Endothelial cell of umbilical vein (primary cell): ENCODE measurements at regions of chr5 and their contacts with region 1.

Region 1: DNA sequence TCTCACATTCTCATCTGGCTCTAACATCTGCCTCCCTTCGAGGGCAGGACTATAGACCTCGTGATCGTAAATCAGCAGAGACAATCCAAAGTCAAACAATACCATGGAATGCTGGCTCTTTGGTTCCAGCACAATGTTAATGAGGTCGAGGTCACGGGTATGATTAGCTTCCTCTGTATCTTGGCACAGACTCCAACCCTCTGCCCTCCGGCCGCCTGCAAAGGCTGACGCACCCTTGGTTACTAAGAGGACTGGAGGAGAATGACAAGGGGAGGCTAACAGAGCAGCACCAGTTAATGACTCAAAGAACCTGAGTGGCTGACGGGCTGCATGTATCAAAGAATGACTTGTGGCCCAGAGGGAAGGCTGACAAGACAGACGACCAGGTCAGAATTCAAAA is 10.1 kb downstream of the LHFPL2 start:
- DNase-seq: peak; percentile 99
- H3K4me3 ChIP-seq: no peak overlapping the region
- H3K27ac ChIP-seq: peak overlapping the region; percentile 90
- H3K4me1 ChIP-seq: peaks cover 40% of the 10 kb centered on the region
- H3K27me3 ChIP-seq: no peaks in the 10 kb centered on the region
- CTCF ChIP-seq: no peak
- POLR2A ChIP-seq: peak; percentile 48

Region 2: DNA sequence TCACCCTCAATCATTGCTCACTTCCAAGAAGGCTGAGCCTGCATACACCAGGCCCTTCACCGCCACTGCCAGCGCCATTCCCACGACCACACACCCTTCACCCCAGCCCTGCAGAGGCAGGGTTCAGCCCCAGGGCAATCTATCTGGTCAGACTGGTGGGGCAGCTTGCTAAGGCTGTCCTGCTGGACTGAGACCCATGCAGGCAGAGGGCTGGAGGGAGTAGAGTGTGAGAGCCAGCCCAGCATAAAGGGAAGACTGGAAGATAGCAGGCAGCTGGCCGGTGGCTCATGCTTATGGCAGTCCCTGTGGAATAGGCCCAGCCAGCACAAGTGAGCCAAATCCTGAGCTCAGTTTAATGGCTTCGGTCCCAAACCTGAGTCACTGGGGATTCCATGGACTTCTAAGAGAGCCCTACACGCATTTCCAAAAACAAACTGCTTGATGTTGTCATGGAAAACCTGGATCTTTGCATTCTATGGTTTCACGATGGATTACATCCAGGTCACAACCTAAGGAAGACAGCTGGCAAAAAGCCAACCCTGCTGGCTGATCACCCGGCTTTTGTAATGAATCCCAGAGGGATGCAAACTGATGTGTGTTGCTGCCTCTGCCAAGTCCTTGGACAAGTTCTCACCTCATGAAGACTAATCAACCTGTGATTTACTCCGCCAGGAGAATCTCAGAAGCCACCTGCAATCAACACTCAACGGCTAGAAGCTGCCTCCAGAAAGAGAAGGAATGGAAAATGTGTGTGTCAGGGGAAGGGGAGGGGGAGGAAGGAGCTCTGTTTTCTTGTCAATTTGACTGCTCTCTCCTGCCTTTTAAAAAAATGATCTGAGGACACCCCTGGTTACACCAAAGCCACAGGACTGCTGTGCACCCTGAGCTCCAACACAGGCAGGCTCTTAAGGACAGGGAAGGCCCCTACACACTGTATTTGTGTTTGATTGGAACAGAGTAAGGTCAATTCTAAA is 133.4 kb before region 1 on chr5:
- CTCF ChIA-PET with region 1: no interaction called
- POLR2A ChIA-PET with region 1: no interaction called
- dilution Hi-C with region 1: no loop called
- intact Hi-C with region 1: loop called (anchors 1 kb)
- DNase-seq: peak; percentile 100
- H3K4me3 ChIP-seq: no peak overlapping the region
- H3K27ac ChIP-seq: peak overlapping the region; percentile 86
- H3K4me1 ChIP-seq: peaks cover 18% of the 10 kb centered on the region
- H3K27me3 ChIP-seq: no peaks in the 10 kb centered on the region
- CTCF ChIP-seq: no peak
- POLR2A ChIP-seq: no peak

Region 3: DNA sequence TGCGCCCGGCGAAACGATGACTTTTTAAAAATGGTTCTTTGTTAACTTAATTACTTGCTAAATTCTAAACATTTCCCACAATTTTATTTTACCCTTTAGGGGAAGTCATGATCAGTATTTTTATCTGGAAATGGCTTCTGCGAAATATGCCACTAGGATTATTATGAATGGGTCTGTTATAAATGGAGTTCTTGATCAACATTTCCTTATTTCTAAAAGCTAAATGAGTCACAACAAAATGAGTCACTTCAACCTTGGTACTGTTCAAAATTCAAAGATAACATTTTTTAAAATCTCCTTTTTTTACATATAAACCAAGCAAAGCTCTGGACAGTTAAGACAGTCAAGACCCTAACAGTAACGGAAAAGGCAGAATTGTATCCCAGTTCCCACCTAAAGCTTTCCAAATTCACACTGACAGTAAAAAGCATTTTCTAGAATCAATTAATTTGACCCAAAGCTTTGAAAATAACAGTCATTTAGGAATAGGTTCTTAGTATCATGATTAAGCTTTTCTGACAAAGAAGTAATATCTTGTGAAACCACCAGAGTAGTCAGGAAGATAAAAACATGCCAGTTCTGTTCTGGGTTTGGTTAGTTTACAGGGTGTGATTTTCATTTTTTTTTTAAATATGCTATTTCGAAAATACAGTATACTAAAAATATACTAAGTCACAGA is 71.5 kb before region 1 on chr5:
- CTCF ChIA-PET with region 1: interaction called, 4 read pairs
- POLR2A ChIA-PET with region 1: no interaction called
- dilution Hi-C with region 1: no loop called
- intact Hi-C with region 1: loop called (anchors 1 kb)
- DNase-seq: peak; percentile 74
- H3K4me3 ChIP-seq: no peak overlapping the region
- H3K27ac ChIP-seq: peak overlapping the region; percentile 71
- H3K4me1 ChIP-seq: peaks cover 39% of the 10 kb centered on the region
- H3K27me3 ChIP-seq: no peaks in the 10 kb centered on the region
- CTCF ChIP-seq: no peak
- POLR2A ChIP-seq: no peak

Region 4: GRCh38 chr5:78594610-78595457 is 43.6 kb before region 1 on chr5:
- CTCF ChIA-PET with region 1: no interaction called
- POLR2A ChIA-PET with region 1: no interaction called
- dilution Hi-C with region 1: no loop called
- intact Hi-C with region 1: loop called (anchors 1 kb)
- DNase-seq: peak; percentile 97
- H3K4me3 ChIP-seq: no peak overlapping the region
- H3K27ac ChIP-seq: peak overlapping the region; percentile 100
- H3K4me1 ChIP-seq: peaks cover 66% of the 10 kb centered on the region
- H3K27me3 ChIP-seq: no peaks in the 10 kb centered on the region
- CTCF ChIP-seq: no peak
- POLR2A ChIP-seq: no peak

Region 5: DNA sequence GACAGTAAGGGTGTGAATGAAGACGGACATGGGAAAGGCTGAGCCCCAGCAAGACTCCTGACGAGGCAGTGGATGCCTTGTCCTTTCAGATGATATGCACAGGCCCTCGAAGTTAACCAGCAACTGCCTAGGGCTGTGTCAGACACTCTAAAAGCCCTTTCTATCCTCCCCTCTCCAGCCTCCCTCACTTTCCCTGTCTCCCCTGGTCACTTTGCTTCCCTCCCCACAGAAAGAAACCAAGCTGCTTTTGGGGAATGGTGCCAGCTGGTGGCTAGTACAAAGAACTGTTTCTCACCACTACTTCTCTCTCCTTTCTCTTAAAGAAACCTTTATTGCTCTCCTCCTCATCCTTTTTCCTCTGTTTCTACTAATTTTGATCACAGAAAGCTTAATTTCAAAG is 11.2 kb before region 1 on chr5:
- CTCF ChIA-PET with region 1: interaction called, 10 read pairs
- POLR2A ChIA-PET with region 1: no interaction called
- dilution Hi-C with region 1: no loop called
- intact Hi-C with region 1: no loop called
- DNase-seq: peak; percentile 44
- H3K4me3 ChIP-seq: no peak overlapping the region
- H3K27ac ChIP-seq: no peak overlapping the region
- H3K4me1 ChIP-seq: no peaks in the 10 kb centered on the region
- H3K27me3 ChIP-seq: no peaks in the 10 kb centered on the region
- CTCF ChIP-seq: peak; percentile 27 to 54
- POLR2A ChIP-seq: no peak

Region 6: DNA sequence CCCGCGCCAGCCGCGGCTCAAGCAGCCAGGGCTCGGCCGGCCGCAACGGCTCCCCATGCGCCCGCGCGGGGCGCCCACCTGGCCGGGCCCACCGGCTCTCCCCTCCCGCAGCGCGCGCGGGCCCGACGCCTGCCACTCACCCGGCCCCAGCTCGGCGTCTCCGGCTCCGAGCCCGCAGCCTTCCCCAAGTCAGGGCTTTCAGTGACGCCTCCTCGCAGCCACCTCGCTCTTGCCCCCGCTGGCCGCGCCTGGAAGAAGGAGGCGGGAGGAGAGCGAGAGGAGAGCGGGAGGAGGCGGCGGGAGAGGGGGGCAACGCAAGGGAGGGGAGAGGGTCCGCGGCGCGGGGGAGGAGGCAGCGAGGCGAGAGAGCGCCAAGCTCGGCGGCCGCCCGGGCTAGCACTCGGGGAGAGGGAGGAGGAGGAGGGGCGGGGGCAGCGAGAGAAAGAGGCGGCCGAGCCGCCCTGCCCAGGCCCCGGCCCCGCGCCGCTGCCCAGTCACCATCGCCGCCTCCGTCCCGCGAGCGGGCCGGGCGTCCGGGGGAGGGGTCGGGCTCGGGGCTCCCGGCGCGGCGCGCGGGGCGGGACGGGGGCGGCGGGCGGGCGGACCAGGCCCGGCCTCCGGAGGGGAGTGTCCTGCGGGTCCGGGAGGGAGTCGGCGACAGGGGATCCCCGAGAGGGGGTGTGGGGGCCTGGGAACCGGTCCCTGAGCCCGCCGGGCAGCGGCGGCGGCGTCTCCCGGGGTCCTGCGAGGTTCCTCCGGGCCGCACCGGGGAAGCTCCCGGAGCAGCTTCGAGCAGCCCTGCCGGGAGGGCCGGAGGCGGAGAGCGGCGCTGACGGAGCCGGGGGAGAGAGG is 10.2 kb after region 1 on chr5 and contains the start of gene LHFPL2:
- CTCF ChIA-PET with region 1: interaction called, 5 read pairs
- POLR2A ChIA-PET with region 1: interaction called, 4 read pairs
- dilution Hi-C with region 1: no loop called
- intact Hi-C with region 1: loop called (anchors 1 kb)
- DNase-seq: peak; percentile 77
- H3K4me3 ChIP-seq: peak within 1 kb of the TSS; percentile 38 to 78 (median 62)
- H3K27ac ChIP-seq: peak within 1 kb of the TSS; percentile 82
- H3K4me1 ChIP-seq: peaks cover 19% of the 10 kb centered on the region
- H3K27me3 ChIP-seq: no peaks in the 10 kb centered on the region
- CTCF ChIP-seq: no peak
- POLR2A ChIP-seq: no peak
- total RNA-seq, gene LHFPL2: 26.8 and 36.3 TPM in 2 replicates

Region 7: GRCh38 chr5:78771260-78772205 is 133.1 kb after region 1 on chr5:
- CTCF ChIA-PET with region 1: no interaction called
- POLR2A ChIA-PET with region 1: interaction called, 10 read pairs
- dilution Hi-C with region 1: no loop called
- intact Hi-C with region 1: no loop called
- DNase-seq: peak; percentile 91
- H3K4me3 ChIP-seq: peak overlapping the region in 1 of 3 experiments; percentile 10
- H3K27ac ChIP-seq: peak overlapping the region; percentile 73
- H3K4me1 ChIP-seq: peaks cover 15% of the 10 kb centered on the region
- H3K27me3 ChIP-seq: no peaks in the 10 kb centered on the region
- CTCF ChIP-seq: no peak
- POLR2A ChIP-seq: no peak

Region 8: GRCh38 chr5:79111960-79112702 is 473.7 kb after region 1 on chr5:
- CTCF ChIA-PET with region 1: no interaction called
- POLR2A ChIA-PET with region 1: no interaction called
- dilution Hi-C with region 1: no loop called
- intact Hi-C with region 1: no loop called
- DNase-seq: no peak
- H3K4me3 ChIP-seq: no peak overlapping the region
- H3K27ac ChIP-seq: no peak overlapping the region
- H3K4me1 ChIP-seq: no peaks in the 10 kb centered on the region
- H3K27me3 ChIP-seq: peaks cover 29 to 38% of the 10 kb centered on the region in 2 experiments
- CTCF ChIP-seq: no peak
- POLR2A ChIP-seq: no peak